ENCODE measurements at regions of chr13 and their contacts with region 1.

Region 1: GRCh38 chr13:73058736-73059459 is at the start of gene KLF5:
- DNase-seq: peak; percentile 93 to 99
- H3K4me3 ChIP-seq: peak within 1 kb of the TSS; percentile 87 to 96
- H3K27ac ChIP-seq: peak within 1 kb of the TSS; percentile 68 to 72
- H3K4me1 ChIP-seq: no peaks in the 10 kb centered on the region
- H3K27me3 ChIP-seq: no peaks in the 10 kb centered on the region
- CTCF ChIP-seq: no peak
- total RNA-seq, gene KLF5: 1.3 TPM

Region 2: DNA sequence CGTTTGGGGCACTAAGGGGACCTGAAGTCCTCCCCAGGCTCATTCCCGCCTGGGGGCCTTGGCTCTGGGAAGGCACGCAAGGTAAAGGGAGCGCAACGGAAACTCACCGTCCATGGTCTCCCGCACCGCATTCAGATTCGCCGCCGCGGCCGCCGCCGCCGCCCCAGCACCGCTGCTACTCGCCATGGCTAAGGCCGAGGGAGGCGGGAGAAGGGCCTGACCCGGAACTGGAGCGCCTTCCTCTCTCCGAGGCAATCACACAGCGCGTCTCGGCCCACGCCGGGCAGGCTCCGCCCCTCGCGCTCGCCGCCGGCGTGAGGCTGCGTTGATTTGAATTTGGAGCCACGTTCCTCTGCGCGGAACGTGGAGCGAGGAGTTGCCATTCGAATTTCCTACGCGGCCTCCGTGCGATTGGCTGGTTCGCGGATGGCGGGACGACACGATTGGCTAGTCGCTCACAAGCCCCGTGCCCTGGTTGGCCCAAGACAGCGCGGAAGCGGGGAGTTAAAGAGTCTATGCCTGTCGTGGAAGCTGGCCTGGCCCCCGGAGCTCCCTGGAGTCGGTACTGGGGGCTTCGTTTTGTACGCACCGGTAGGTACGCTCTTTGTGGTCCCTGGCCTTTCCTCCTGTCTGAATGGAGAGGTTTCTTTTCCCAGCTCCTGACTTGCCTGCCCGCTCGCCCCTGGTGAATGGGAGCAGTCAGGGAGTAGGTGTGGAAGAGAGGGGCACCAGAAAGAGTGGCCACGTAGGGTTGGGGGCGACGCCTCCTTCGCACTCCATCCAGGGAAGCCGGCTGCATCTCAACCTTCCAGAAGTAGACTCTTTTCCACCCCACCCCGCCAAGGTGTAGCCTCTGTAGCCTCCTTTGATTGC is 331.2 kb before region 1 on chr13 and contains the starts of genes BORA and MZT1:
- intact Hi-C with region 1: loop called (anchors 2 kb)
- DNase-seq: peak; percentile 87 to 98
- H3K4me3 ChIP-seq: peak within 1 kb of the TSS; percentile 76 to 82
- H3K27ac ChIP-seq: peak within 1 kb of the TSS; percentile 17 to 51
- H3K4me1 ChIP-seq: peaks cover 0 to 15% of the 10 kb centered on the region in 2 donors
- H3K27me3 ChIP-seq: no peaks in the 10 kb centered on the region
- CTCF ChIP-seq: no peak
- total RNA-seq, gene BORA: not detected
- total RNA-seq, gene MZT1: 4.4 TPM

Region 3: GRCh38 chr13:72781451-72782439 is 277.2 kb before region 1 on chr13 and contains the starts of genes DIS3 and PIBF1:
- intact Hi-C with region 1: loop called (anchors 1 kb)
- DNase-seq: peak; percentile 93 to 99
- H3K4me3 ChIP-seq: peak within 1 kb of the TSS; percentile 88 to 92
- H3K27ac ChIP-seq: peak within 1 kb of the TSS; percentile 85 to 92
- H3K4me1 ChIP-seq: peaks cover 0 to 21% of the 10 kb centered on the region in 2 donors
- H3K27me3 ChIP-seq: no peaks in the 10 kb centered on the region
- CTCF ChIP-seq: no peak
- total RNA-seq, gene DIS3: 12.8 TPM
- total RNA-seq, gene PIBF1: 17.0 TPM

Region 4: DNA sequence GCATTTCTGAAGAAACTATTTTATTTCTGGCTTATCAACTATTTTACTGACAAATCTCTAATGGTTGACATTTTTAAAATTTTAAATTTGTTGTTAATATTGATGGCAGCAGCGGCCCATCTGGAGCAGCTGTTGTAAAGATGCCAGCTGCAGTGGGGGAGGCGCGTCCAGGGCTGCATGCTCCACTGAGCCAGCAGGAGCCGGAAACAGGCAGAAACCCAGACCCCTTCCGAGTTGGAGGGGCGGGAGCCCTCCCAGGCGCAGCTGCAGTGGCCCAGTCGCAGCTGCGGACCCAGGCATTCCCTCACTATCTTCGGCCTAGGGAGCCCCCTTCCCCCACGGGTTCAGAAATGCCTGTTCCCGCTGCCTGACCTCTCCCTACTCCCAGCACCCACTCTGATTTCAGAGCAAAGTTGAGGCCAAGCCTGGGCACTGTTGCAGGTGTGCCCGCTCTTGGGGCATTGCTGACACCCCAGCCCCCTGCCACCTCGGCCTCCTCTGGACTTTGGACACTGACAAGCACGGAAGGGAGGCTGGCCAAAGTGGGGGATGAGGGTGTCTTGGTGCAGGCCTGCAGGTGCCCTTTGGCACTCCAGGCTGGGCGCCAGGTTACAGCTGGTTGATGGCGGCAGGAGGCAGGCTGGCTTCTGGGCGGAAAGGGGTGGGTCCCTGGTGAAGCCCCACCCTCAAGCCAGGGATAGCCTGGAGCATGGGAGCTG is 207.8 kb before region 1 on chr13:
- intact Hi-C with region 1: loop called (anchors 10 kb)
- DNase-seq: no peak
- H3K4me3 ChIP-seq: no peak overlapping the region
- H3K27ac ChIP-seq: no peak overlapping the region
- H3K4me1 ChIP-seq: no peaks in the 10 kb centered on the region
- H3K27me3 ChIP-seq: no peaks in the 10 kb centered on the region
- CTCF ChIP-seq: no peak

Region 5: DNA sequence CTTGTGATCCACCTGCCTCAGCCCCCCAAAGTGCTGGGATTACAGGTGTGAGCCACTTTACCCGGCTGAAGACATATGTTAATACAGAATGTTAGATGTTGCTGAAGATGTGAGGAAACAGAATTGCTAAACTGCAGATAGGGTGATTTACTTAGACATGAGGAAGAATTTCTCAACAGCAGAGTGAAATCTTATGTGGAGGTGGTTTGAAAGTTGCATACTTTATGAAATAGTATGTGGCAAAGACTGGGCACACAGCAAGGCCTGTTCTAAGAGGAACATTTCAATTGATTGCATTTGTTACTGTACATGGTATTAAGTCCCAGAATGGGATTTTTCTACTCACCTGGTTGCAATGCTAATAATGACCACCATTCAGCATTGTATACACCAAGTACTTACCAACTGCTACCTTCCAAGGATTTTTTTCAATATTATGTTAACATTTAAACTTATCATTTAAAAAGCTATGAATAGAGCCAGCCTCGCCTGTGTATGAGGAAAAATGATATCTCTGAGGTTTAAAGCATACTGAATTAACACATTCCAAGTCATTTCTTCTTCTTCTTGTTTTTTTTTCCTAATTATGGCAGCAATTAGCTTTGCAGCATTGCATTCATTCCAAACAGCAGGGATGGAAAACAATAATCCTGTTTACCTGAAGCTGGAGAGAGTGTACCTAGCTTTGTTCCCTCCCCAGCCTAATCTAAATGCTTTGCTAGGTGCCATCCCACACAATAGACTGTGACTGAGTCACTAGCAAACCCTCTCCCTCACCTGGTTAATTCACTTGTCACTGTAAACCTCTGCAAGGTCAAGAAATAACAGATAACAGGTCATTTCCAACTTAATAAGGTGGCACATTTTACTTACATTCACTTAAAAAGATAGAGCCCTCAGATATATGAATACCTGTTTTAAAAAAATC is 19.5 kb before region 1 on chr13:
- intact Hi-C with region 1: no loop called
- DNase-seq: no peak
- H3K4me3 ChIP-seq: no peak overlapping the region
- H3K27ac ChIP-seq: no peak overlapping the region
- H3K4me1 ChIP-seq: no peaks in the 10 kb centered on the region
- H3K27me3 ChIP-seq: no peaks in the 10 kb centered on the region
- CTCF ChIP-seq: no peak

Region 6: GRCh38 chr13:73215807-73216206 is 156.9 kb after region 1 on chr13:
- intact Hi-C with region 1: loop called (anchors 5 kb)
- DNase-seq: no peak
- H3K4me3 ChIP-seq: no peak overlapping the region
- H3K27ac ChIP-seq: no peak overlapping the region
- H3K4me1 ChIP-seq: peaks cover 0 to 10% of the 10 kb centered on the region in 2 donors
- H3K27me3 ChIP-seq: no peaks in the 10 kb centered on the region
- CTCF ChIP-seq: no peak

Region 7: GRCh38 chr13:73714522-73714921 is 655.6 kb after region 1 on chr13:
- intact Hi-C with region 1: loop called (anchors 5 kb)
- DNase-seq: no peak
- H3K4me3 ChIP-seq: no peak overlapping the region
- H3K27ac ChIP-seq: no peak overlapping the region
- H3K4me1 ChIP-seq: peaks cover 0 to 4% of the 10 kb centered on the region in 2 donors
- H3K27me3 ChIP-seq: no peaks in the 10 kb centered on the region
- CTCF ChIP-seq: no peak

Measured in ascending aorta (tissue), 2 donors.